Left ventricle myocardium superior (tissue), 1 donor: ENCODE measurements at regions of chr2 and their contacts with region 1.

Region 1: DNA sequence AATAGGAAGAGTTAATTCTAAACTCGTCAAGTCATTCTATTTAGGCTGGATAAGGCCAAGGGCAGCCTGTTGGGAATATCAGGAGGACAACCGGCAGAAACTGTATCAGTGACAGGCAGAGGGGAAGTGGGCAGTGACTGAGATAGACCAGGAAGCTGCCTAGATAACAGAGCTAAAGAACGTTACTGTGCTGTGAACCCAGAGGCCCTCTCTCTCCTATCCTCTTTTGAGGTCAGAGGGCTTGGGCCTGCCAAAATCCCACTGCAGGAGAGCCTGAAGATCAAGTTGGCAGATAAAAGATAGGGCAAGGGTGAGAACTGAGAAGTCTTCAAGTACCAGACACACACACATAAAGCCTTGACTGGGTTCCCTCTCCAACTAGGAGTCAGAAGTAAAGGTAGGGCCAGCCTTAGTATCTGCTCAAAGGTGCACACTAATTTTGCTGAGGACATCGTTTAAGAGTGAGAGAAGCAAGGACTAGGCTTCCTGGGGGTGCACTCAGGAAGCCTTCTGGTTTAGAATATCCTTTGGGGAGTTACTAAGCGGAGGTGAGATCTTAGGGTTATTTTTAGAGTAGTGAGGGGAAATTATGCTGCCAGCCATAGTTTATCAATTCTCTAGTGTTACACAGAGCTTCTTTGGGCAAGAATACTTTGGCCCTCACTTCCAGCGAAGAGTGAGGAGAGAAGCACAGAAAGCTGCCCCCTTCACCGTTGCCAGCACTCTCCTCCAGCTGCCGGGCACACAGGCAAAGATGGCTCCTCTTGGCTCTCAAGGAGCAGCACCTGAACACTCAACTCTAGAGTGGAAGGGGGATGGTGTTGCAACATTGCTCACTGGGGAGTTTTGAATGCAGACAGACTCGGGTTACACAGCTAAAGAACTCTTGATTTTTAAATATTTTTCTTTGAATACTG is 9.8 kb downstream of the CAVIN2 start:
- DNase-seq: peak; percentile 32
- ATAC-seq: peak; percentile 87

Region 2: DNA sequence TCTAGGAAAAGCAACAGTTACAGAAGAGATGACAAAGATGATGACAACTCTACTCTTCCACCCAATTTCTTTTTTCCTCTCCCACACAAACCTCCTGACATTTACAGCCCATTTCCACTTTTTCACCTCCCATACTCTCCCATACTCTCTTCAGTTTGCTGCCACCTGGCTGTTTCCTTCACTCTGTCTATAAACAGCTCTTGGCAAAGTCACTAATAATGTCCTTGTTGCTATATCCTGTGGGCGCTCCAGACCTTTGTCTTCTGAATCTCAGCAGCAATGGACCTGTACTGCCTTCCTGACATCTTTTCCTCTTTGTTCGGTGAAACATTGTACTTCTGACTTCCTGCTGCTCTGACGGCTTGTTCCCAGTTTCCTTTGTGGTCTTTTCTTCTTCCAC is 70.4 kb after region 1 on chr2:
- intact Hi-C with region 1: loop called (anchors 10 kb)
- DNase-seq: no peak
- ATAC-seq: peak; percentile 89